ENCODE measurements at regions of chr7 and their contacts with region 1.

Region 1: GRCh38 chr7:22121702-22122474 is 176.2 kb upstream of the CDCA7L start:
- DNase-seq: peak in 1 of 2 donors; percentile 79
- ATAC-seq: peak; percentile 65 to 87 (median 78)
- H3K4me3 ChIP-seq: no peak overlapping the region
- H3K27ac ChIP-seq: peak overlapping the region in 9 of 10 donors; percentile 38 to 79 (median 68)
- H3K4me1 ChIP-seq: peaks cover 0 to 44% (median 34%) of the 10 kb centered on the region in 9 donors
- H3K27me3 ChIP-seq: peaks cover 0 to 8% (median 0%) of the 10 kb centered on the region in 7 donors
- CTCF ChIP-seq: no peak

Region 2: GRCh38 chr7:21984042-21984441 is 137.8 kb before region 1 on chr7:
- intact Hi-C with region 1: no loop called
- DNase-seq: no peak
- ATAC-seq: no peak
- H3K4me3 ChIP-seq: no peak overlapping the region
- H3K27ac ChIP-seq: no peak overlapping the region
- H3K4me1 ChIP-seq: peaks cover 0 to 4% (median 0%) of the 10 kb centered on the region in 9 donors
- H3K27me3 ChIP-seq: no peaks in the 10 kb centered on the region
- CTCF ChIP-seq: no peak

Region 3: GRCh38 chr7:22219036-22219435 is 97.1 kb after region 1 on chr7:
- intact Hi-C with region 1: loop called in 1 of 10 experiments (anchors 5 kb)
- DNase-seq: no peak
- ATAC-seq: peak in 7 of 8 donors; percentile 41 to 65 (median 57)
- H3K4me3 ChIP-seq: peak overlapping the region; percentile 12 to 67 (median 47)
- H3K27ac ChIP-seq: peak overlapping the region; percentile 52 to 89 (median 82)
- H3K4me1 ChIP-seq: peaks cover 0 to 56% (median 8%) of the 10 kb centered on the region in 9 donors
- H3K27me3 ChIP-seq: no peaks in the 10 kb centered on the region
- CTCF ChIP-seq: no peak